ENCODE measurements at regions of chr15 and their contacts with region 1.

Region 1: GRCh38 chr15:25933456-25934158 is 70.5 kb upstream of the ATP10A start:
- DNase-seq: peak; percentile 86
- ATAC-seq: peak; percentile 99
- H3K4me3 Mint-ChIP-seq: peak overlapping the region; percentile 62
- H3K27ac Mint-ChIP-seq: peak overlapping the region; percentile 88
- H3K4me1 Mint-ChIP-seq: peaks cover 5% of the 10 kb centered on the region
- H3K27me3 Mint-ChIP-seq: no peaks in the 10 kb centered on the region

Region 2: GRCh38 chr15:25508369-25509002 is 425.1 kb before region 1 on chr15:
- CTCF ChIA-PET with region 1: interaction called, 14 read pairs
- POLR2A ChIA-PET with region 1: no interaction called
- intact Hi-C with region 1: loop called (anchors 1 to 2 kb)
- DNase-seq: no peak
- ATAC-seq: no peak
- H3K4me3 Mint-ChIP-seq: no peak overlapping the region
- H3K27ac Mint-ChIP-seq: no peak overlapping the region
- H3K4me1 Mint-ChIP-seq: no peaks in the 10 kb centered on the region
- H3K27me3 Mint-ChIP-seq: peaks cover 3% of the 10 kb centered on the region

Region 3: GRCh38 chr15:25693321-25694237 is 240.0 kb before region 1 on chr15:
- CTCF ChIA-PET with region 1: interaction called, 6 read pairs
- POLR2A ChIA-PET with region 1: no interaction called
- intact Hi-C with region 1: loop called (anchors 1 kb)
- DNase-seq: peak; percentile 64
- ATAC-seq: peak; percentile 63
- H3K4me3 Mint-ChIP-seq: no peak overlapping the region
- H3K27ac Mint-ChIP-seq: no peak overlapping the region
- H3K4me1 Mint-ChIP-seq: no peaks in the 10 kb centered on the region
- H3K27me3 Mint-ChIP-seq: no peaks in the 10 kb centered on the region

Region 4: GRCh38 chr15:25710184-25710583 is 223.4 kb before region 1 on chr15:
- CTCF ChIA-PET with region 1: interaction called, 12 read pairs
- POLR2A ChIA-PET with region 1: no interaction called
- intact Hi-C with region 1: no loop called
- DNase-seq: peak; percentile 75
- ATAC-seq: peak; percentile 90
- H3K4me3 Mint-ChIP-seq: no peak overlapping the region
- H3K27ac Mint-ChIP-seq: no peak overlapping the region
- H3K4me1 Mint-ChIP-seq: no peaks in the 10 kb centered on the region
- H3K27me3 Mint-ChIP-seq: no peaks in the 10 kb centered on the region

Region 5: GRCh38 chr15:25739687-25740121 is 193.9 kb before region 1 on chr15:
- CTCF ChIA-PET with region 1: interaction called, 6 read pairs
- POLR2A ChIA-PET with region 1: no interaction called
- intact Hi-C with region 1: loop called (anchors 1 to 2 kb)
- DNase-seq: peak; percentile 63
- ATAC-seq: peak; percentile 88
- H3K4me3 Mint-ChIP-seq: no peak overlapping the region
- H3K27ac Mint-ChIP-seq: no peak overlapping the region
- H3K4me1 Mint-ChIP-seq: peaks cover 19% of the 10 kb centered on the region
- H3K27me3 Mint-ChIP-seq: no peaks in the 10 kb centered on the region

Region 6: GRCh38 chr15:25783607-25784540 is 149.7 kb before region 1 on chr15:
- CTCF ChIA-PET with region 1: interaction called, 16 read pairs
- POLR2A ChIA-PET with region 1: no interaction called
- intact Hi-C with region 1: loop called (anchors 5 to 10 kb)
- DNase-seq: peak; percentile 70
- ATAC-seq: peak; percentile 50
- H3K4me3 Mint-ChIP-seq: no peak overlapping the region
- H3K27ac Mint-ChIP-seq: no peak overlapping the region
- H3K4me1 Mint-ChIP-seq: peaks cover 40% of the 10 kb centered on the region
- H3K27me3 Mint-ChIP-seq: no peaks in the 10 kb centered on the region

Region 7: GRCh38 chr15:25905140-25905539 is 28.5 kb before region 1 on chr15:
- CTCF ChIA-PET with region 1: no interaction called
- POLR2A ChIA-PET with region 1: no interaction called
- intact Hi-C with region 1: loop called in 1 of 2 experiments (anchors 2 kb)
- DNase-seq: peak; percentile 72
- ATAC-seq: peak; percentile 94
- H3K4me3 Mint-ChIP-seq: no peak overlapping the region
- H3K27ac Mint-ChIP-seq: peak overlapping the region; percentile 74
- H3K4me1 Mint-ChIP-seq: peaks cover 16% of the 10 kb centered on the region
- H3K27me3 Mint-ChIP-seq: no peaks in the 10 kb centered on the region

Region 8: GRCh38 chr15:26157081-26157480 is 223.5 kb after region 1 on chr15:
- CTCF ChIA-PET with region 1: no interaction called
- POLR2A ChIA-PET with region 1: no interaction called
- intact Hi-C with region 1: no loop called
- DNase-seq: no peak
- ATAC-seq: no peak
- H3K4me3 Mint-ChIP-seq: no peak overlapping the region
- H3K27ac Mint-ChIP-seq: no peak overlapping the region
- H3K4me1 Mint-ChIP-seq: no peaks in the 10 kb centered on the region
- H3K27me3 Mint-ChIP-seq: peaks cover 10% of the 10 kb centered on the region

Measured in activated CD4-positive, alpha-beta T cell treated with anti-CD3 and anti-CD28 coated beads for 36 hours (primary cell).